PC-3 (cell line): ENCODE measurements at regions of chr2 and their contacts with region 1.

Region 1: DNA sequence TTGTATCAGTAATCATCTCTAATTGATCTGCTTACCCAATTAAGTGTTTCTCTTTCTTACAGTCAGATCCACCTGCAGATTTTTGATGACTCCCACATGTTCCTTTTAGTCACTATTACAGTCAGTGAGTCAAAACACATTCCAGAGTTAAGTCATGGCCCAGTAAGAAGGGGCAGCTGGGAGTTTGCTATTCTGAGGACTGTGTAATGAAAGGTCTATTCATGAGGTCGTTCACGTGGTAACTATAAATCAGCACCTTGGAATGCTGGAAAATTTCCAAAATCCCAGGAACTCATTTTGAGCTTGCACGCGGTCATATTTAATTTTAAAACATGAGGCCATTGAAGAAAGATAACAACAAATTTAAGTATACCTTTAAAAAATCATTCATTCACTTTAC is 252.5 kb downstream of the XIRP2 start:
- DNase-seq: peak; percentile 99
- ATAC-seq: peak; percentile 98
- H3K4me3 ChIP-seq: no peak overlapping the region
- H3K27ac ChIP-seq: peak overlapping the region; percentile 89
- H3K4me1 ChIP-seq: peaks cover 40% of the 10 kb centered on the region
- H3K27me3 ChIP-seq: no peaks in the 10 kb centered on the region
- CTCF ChIP-seq: no peak

Region 2: GRCh38 chr2:166984797-166985196 is 156.0 kb before region 1 on chr2:
- CTCF ChIA-PET with region 1: no interaction called
- POLR2A ChIA-PET with region 1: no interaction called
- intact Hi-C with region 1: loop called (anchors 10 kb)
- DNase-seq: peak; percentile 89
- ATAC-seq: peak; percentile 99
- H3K4me3 ChIP-seq: no peak overlapping the region
- H3K27ac ChIP-seq: peak overlapping the region; percentile 77
- H3K4me1 ChIP-seq: peaks cover 18% of the 10 kb centered on the region
- H3K27me3 ChIP-seq: no peaks in the 10 kb centered on the region
- CTCF ChIP-seq: no peak

Region 3: DNA sequence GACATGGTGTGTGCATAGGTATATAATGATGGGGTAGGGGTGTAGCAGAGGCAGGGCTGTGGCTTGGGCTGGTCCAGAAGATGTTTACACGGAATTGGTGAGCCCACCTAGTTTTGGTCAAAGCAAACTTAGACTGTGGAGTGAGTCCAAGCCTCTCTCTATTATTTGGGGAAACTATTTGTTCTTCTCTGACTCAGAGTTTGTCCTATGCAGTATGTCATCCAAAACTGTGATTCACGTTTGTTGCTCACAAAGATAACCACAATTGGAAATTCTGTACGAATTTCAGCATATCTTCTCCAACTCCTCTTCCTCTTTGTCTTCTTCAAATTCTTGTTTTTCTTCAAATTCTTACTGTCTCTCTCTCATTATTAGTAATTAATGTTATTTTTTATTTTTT is 40.4 kb after region 1 on chr2:
- CTCF ChIA-PET with region 1: no interaction called
- POLR2A ChIA-PET with region 1: no interaction called
- intact Hi-C with region 1: loop called (anchors 2 kb)
- DNase-seq: peak; percentile 90
- ATAC-seq: peak; percentile 94
- H3K4me3 ChIP-seq: no peak overlapping the region
- H3K27ac ChIP-seq: peak overlapping the region; percentile 90
- H3K4me1 ChIP-seq: peaks cover 21% of the 10 kb centered on the region
- H3K27me3 ChIP-seq: no peaks in the 10 kb centered on the region
- CTCF ChIP-seq: no peak